ENCODE measurements at regions of chr10 and their contacts with region 1.

Region 1: GRCh38 chr10:63521416-63522276 is 445 bp downstream of the REEP3 start:
- DNase-seq: peak; percentile 81
- ATAC-seq: peak; percentile 90

Region 2: GRCh38 chr10:63605197-63605967 is 83.7 kb after region 1 on chr10:
- intact Hi-C with region 1: loop called (anchors 5 kb)
- DNase-seq: no peak
- ATAC-seq: peak; percentile 50